IMR-90 (cell line): ENCODE measurements at regions of chr17 and their contacts with region 1.

Region 1: GRCh38 chr17:46940621-46941404 is 17.9 kb downstream of the GOSR2 start:
- DNase-seq: peak; percentile 60
- ATAC-seq: peak; percentile 74
- H3K4me3 ChIP-seq: no peak overlapping the region
- H3K27ac ChIP-seq: no peak overlapping the region
- H3K4me1 ChIP-seq: peaks cover 10% of the 10 kb centered on the region
- H3K27me3 ChIP-seq: no peaks in the 10 kb centered on the region
- CTCF ChIP-seq: peak; percentile 76
- POLR2A ChIP-seq: no peak
- RAD21 ChIP-seq: peak; percentile 82

Region 2: GRCh38 chr17:46795379-46795952 is 145.3 kb before region 1 on chr17:
- CTCF ChIA-PET with region 1: no interaction called
- POLR2A ChIA-PET with region 1: no interaction called
- dilution Hi-C with region 1: no loop called
- in situ Hi-C with region 1: no loop called
- intact Hi-C with region 1: no loop called
- DNase-seq: no peak
- ATAC-seq: no peak
- H3K4me3 ChIP-seq: no peak overlapping the region
- H3K27ac ChIP-seq: no peak overlapping the region
- H3K4me1 ChIP-seq: no peaks in the 10 kb centered on the region
- H3K27me3 ChIP-seq: peaks cover 60% of the 10 kb centered on the region
- CTCF ChIP-seq: no peak
- POLR2A ChIP-seq: no peak
- RAD21 ChIP-seq: no peak

Region 3: DNA sequence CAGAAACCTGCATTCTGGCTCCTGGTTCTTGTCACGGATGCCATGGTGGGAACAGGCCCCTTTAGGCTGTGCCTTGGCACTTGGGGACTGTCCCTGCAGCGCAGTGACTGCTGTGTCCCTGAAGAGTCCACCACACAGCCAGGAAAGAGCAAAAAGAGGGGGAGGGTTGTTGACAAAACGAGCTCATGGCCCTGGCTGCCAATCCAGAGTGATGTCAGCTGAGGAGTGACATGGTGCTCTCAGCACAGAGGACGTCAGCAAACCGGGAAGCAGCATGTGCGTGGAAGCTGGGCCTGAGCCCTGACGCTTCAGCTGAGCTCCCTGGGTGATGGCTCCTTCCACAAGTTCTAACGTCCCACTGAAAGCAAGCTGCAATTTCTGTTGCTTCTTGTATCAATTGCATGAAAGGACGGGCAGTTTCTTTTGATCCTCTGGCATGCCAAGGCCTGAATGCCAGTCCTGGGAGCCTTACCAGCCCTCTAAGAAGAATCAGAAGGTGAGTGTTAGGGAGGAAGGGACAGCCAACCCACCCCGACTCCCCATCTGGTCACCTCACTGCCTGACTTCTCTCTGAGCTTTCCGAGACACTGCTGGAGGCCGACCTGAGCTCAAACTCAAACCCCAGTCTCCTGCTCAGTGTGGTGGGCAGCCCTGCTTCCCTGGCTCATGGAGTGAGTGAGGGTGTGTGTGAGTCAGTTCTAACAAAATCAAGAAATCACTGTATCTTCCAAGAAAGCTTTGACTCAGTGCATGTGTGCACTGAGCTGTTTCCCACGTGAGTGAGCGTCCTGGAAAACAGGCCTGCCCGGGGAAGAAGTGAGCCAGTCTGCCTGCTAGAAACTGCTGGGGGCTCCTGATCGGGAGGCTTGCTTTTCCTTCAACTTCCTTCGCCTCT is 107.6 kb before region 1 on chr17:
- CTCF ChIA-PET with region 1: no interaction called
- POLR2A ChIA-PET with region 1: no interaction called
- dilution Hi-C with region 1: no loop called
- in situ Hi-C with region 1: loop called (anchors 5 kb)
- intact Hi-C with region 1: no loop called
- DNase-seq: peak; percentile 87
- ATAC-seq: peak; percentile 74
- H3K4me3 ChIP-seq: no peak overlapping the region
- H3K27ac ChIP-seq: no peak overlapping the region
- H3K4me1 ChIP-seq: no peaks in the 10 kb centered on the region
- H3K27me3 ChIP-seq: peaks cover 21% of the 10 kb centered on the region; the same call in 1 of the 2 replicates
- CTCF ChIP-seq: no peak
- POLR2A ChIP-seq: no peak
- RAD21 ChIP-seq: no peak; the same call in 1 of the 2 replicates

Region 4: DNA sequence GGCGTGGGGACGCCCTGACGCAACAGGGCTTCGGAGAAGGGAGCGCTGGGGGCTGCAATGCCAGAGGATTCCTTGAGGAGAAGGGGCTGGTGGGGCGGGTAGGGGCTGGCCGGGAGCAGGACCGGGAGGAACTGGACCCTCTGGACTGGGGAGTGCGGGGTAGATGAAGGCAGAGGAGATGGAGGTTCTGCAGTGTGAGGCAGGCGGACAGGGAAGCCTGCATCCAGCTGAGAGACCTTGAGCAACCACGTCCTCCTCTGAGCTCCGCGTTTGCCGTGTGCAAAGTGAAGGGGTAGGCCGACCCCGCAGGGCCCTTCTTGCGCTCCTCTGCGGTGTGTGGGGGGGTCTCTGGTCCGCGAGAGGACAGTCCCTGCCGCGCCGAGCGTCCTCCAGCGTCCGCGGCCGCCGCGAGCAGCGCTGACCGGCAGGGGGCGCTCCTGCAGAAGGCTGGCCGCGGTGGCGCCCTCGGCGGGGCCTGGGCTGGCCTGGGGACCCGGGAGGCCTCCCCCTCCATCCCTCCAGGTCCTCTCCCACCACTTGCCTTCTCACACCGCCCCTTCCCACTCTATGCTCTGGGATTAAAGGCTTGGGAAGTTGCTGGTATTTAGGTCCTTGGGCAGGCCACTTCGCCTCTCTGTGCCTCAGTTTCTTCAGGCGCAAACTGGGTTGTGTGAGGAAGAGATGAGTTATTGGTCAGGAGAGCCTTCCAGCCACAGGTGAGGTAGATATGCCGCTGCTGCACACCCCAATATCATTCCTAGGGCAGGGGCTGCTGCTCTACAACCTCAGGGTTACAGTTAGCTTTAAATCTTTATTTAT is 99.0 kb before region 1 on chr17:
- CTCF ChIA-PET with region 1: interaction called, 3 read pairs
- POLR2A ChIA-PET with region 1: no interaction called
- dilution Hi-C with region 1: no loop called
- in situ Hi-C with region 1: loop called (anchors 5 kb)
- intact Hi-C with region 1: loop called (anchors 2 kb)
- DNase-seq: no peak
- ATAC-seq: peak; percentile 85
- H3K4me3 ChIP-seq: peak overlapping the region; percentile 15; the same call in 1 of the 2 replicates
- H3K27ac ChIP-seq: no peak overlapping the region
- H3K4me1 ChIP-seq: no peaks in the 10 kb centered on the region
- H3K27me3 ChIP-seq: peaks cover 34% of the 10 kb centered on the region
- CTCF ChIP-seq: peak; percentile 65
- POLR2A ChIP-seq: no peak
- RAD21 ChIP-seq: peak; percentile 53

Region 5: GRCh38 chr17:46995841-46996571 is 55.2 kb after region 1 on chr17:
- CTCF ChIA-PET with region 1: interaction called, 7 read pairs
- POLR2A ChIA-PET with region 1: no interaction called
- dilution Hi-C with region 1: no loop called
- in situ Hi-C with region 1: loop called (anchors 5 kb)
- intact Hi-C with region 1: loop called (anchors 1 kb)
- DNase-seq: peak; percentile 59
- ATAC-seq: peak; percentile 35; the same call in 1 of the 2 replicates
- H3K4me3 ChIP-seq: no peak overlapping the region
- H3K27ac ChIP-seq: no peak overlapping the region
- H3K4me1 ChIP-seq: no peaks in the 10 kb centered on the region
- H3K27me3 ChIP-seq: peaks cover 2% of the 10 kb centered on the region; the same call in 1 of the 2 replicates
- CTCF ChIP-seq: no peak
- POLR2A ChIP-seq: no peak
- RAD21 ChIP-seq: no peak

Region 6: DNA sequence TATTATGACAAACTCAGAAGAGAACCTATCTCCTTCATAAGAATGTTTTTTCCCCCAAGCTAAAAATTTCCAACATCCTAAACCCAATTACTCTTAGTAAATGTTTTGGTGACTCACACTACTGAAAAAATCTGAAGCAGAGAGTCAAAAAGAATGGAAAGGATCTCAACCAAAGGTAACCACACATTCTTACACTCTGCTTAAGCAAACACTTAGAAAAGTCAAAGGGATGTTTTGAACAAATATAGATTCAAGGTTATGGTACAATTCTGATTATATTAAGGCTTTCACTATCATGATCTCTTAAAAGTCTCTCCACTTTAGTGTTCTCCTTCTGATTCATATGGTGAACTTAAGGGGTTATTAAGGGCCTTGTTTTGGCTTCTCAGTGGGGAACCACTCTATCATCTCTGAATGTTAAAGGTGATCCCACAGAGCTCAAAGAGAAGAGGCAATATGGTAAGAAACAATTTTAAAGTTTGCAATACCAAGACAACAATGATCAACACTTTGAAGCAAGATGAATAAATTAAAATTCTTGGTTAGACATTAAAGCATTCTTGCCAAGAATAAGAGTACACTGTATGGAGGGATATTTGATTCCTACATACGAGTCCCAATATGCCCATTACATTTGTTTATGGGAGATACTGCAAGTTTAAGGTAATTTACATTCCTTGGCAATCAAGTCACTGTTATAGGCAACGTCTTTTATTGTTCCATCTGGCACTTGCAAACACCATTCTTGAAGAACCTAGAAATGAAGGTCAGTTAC is 179.1 kb after region 1 on chr17:
- CTCF ChIA-PET with region 1: no interaction called
- POLR2A ChIA-PET with region 1: no interaction called
- dilution Hi-C with region 1: no loop called
- in situ Hi-C with region 1: no loop called
- intact Hi-C with region 1: loop called (anchors 5 kb)
- DNase-seq: peak; percentile 76
- ATAC-seq: peak; percentile 82
- H3K4me3 ChIP-seq: no peak overlapping the region
- H3K27ac ChIP-seq: no peak overlapping the region
- H3K4me1 ChIP-seq: peaks cover 4% of the 10 kb centered on the region
- H3K27me3 ChIP-seq: no peaks in the 10 kb centered on the region
- CTCF ChIP-seq: no peak
- POLR2A ChIP-seq: no peak
- RAD21 ChIP-seq: no peak